Prostate gland (tissue), 2 donors: ENCODE measurements at regions of chr13 and their contacts with region 1.

Region 1: GRCh38 chr13:41054212-41054877 is 7.0 kb upstream of the WBP4 start:
- DNase-seq: peak; percentile 49
- H3K4me3 ChIP-seq: no peak overlapping the region
- H3K27ac ChIP-seq: peak overlapping the region; percentile 31 to 59
- H3K4me1 ChIP-seq: peaks cover 5% of the 10 kb centered on the region
- H3K27me3 ChIP-seq: no peaks in the 10 kb centered on the region
- CTCF ChIP-seq: peak in 3 of 4 experiments; percentile 57 to 65 (median 58)
- POLR2A ChIP-seq: no peak

Region 2: GRCh38 chr13:40789275-40790133 is 264.8 kb before region 1 on chr13 and contains the start of gene SLC25A15:
- intact Hi-C with region 1: loop called (anchors 10 kb)
- DNase-seq: peak; percentile 31
- H3K4me3 ChIP-seq: peak within 1 kb of the TSS; percentile 56 to 69
- H3K27ac ChIP-seq: peak within 1 kb of the TSS; percentile 76 to 83
- H3K4me1 ChIP-seq: no peaks in the 10 kb centered on the region
- H3K27me3 ChIP-seq: no peaks in the 10 kb centered on the region
- CTCF ChIP-seq: peak in 2 of 4 experiments; percentile 20 to 58
- POLR2A ChIP-seq: peak; percentile 29
- total RNA-seq, gene SLC25A15: 7.4 to 32.8 TPM

Region 3: DNA sequence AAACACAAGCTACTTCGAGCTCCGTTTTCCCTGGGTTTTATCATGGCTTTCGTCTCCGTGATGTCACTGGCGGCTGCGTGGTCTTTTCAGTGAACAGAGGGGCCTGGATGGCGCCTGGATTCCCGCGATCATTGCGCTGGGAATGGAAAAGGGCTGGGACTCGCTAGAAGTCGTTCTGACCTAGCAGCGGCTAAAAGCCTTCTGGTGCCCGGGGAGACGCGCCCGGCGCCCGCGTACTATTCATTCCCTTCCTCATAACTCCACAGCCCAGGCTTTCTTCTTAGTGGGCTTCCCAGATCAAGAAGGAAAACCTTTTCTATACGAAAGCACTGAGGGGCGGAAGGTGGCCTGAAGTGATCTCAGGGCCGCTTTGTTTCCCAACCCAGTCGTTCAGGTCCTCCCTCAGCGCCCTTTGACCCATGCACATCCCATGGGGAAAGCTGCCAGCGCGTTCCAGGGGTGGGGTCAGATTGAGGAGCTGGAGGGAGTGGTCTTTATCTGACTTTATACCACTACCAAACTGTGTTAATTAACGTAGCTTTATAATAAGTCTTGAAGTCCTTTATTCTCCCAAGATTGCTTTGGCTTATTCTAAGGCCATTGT is 131.8 kb before region 1 on chr13:
- intact Hi-C with region 1: loop called (anchors 5 kb)
- DNase-seq: no peak
- H3K4me3 ChIP-seq: no peak overlapping the region
- H3K27ac ChIP-seq: no peak overlapping the region
- H3K4me1 ChIP-seq: no peaks in the 10 kb centered on the region
- H3K27me3 ChIP-seq: no peaks in the 10 kb centered on the region
- CTCF ChIP-seq: no peak
- POLR2A ChIP-seq: no peak

Region 4: GRCh38 chr13:41310963-41311606 is 256.7 kb after region 1 on chr13 and contains the start of gene NAA16:
- intact Hi-C with region 1: loop called (anchors 5 kb)
- DNase-seq: peak; percentile 73
- H3K4me3 ChIP-seq: peak within 1 kb of the TSS; percentile 70 to 76
- H3K27ac ChIP-seq: peak within 1 kb of the TSS; percentile 93 to 97
- H3K4me1 ChIP-seq: no peaks in the 10 kb centered on the region
- H3K27me3 ChIP-seq: no peaks in the 10 kb centered on the region
- CTCF ChIP-seq: peak in 2 of 4 experiments; percentile 25 to 38
- POLR2A ChIP-seq: peak; percentile 75
- total RNA-seq, gene NAA16: 17.6 to 19.9 TPM